ENCODE measurements at regions of chr6 and their contacts with region 1.

Region 1: DNA sequence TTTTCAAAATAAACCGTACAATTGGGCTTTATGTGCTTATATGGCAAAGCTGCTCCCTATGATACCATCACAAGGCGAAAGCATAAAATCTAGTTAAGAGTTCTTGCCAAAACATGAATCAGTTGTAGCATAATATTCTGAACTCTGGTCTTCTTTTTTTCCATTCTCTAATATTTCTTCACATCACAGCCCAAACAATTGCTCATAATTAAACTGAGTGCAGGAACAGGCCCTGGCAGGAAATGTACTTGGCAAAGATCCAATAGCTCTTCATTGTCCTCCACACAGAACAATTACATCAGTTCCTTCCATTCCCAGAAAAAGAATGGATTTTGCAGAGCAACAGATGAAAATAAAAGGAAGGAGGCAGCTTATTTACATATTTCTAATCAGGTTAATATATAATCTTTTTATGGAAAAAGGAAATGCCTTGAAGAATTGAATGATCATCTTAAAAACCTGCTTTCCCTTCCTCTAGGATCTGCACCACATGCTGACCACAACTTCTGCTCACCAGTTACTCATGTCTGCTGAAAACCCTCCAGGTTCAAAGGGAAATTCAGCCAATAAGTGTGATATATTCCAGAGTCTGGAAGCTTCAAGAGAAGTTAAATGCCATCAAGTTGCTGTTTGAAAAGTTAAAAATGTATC is 123.3 kb upstream of the COL21A1 start:
- DNase-seq: peak in 4 of 5 donors; percentile 35 to 68 (median 64)
- ATAC-seq: peak; percentile 66 to 83 (median 80)
- H3K4me3 ChIP-seq: no peak overlapping the region
- H3K27ac ChIP-seq: peak overlapping the region; percentile 56 to 87 (median 76)
- H3K4me1 ChIP-seq: peaks cover 8 to 84% (median 56%) of the 10 kb centered on the region in 12 donors
- H3K27me3 ChIP-seq: no peaks in the 10 kb centered on the region
- CTCF ChIP-seq: no peak
- POLR2A ChIP-seq: no peak

Region 2: GRCh38 chr6:54856129-54856528 is 1514.6 kb before region 1 on chr6:
- intact Hi-C with region 1: no loop called
- DNase-seq: no peak
- ATAC-seq: no peak
- H3K4me3 ChIP-seq: no peak overlapping the region
- H3K27ac ChIP-seq: no peak overlapping the region
- H3K4me1 ChIP-seq: no peaks in the 10 kb centered on the region
- H3K27me3 ChIP-seq: no peaks in the 10 kb centered on the region
- CTCF ChIP-seq: no peak
- POLR2A ChIP-seq: no peak

Region 3: DNA sequence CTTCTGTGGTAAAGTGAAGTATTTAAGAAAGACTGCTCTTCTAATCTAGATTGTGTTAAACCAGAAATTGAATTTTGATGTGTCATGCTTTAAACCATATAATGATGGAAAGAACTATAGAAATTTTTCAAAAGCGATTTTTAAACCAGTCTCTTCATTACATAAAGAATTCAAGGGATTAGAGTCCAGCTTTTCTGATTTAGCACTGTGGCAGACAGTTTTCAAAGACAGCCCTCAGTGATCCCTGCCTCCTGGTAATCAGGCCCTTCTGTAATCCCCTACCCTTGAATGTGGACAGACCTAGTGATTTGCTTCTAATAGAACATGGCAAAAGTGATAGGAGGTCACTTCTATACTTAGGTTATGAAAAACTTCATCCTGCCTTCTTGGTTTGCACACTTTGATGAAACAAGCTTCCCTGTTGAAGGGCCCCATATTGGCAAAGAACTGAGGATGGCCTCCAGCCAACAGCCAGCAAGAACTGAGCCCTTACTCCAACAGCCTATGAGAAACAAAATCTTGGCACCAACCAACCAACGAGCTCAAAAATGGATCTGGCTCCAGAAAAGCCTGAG is 80.6 kb after region 1 on chr6:
- intact Hi-C with region 1: loop called in 4 of 10 experiments (anchors 5 kb)
- DNase-seq: peak; percentile 74 to 83 (median 81)
- ATAC-seq: peak; percentile 71 to 88 (median 78)
- H3K4me3 ChIP-seq: no peak overlapping the region
- H3K27ac ChIP-seq: peak overlapping the region; percentile 39 to 83 (median 70)
- H3K4me1 ChIP-seq: peaks cover 0 to 31% (median 14%) of the 10 kb centered on the region in 12 donors
- H3K27me3 ChIP-seq: no peaks in the 10 kb centered on the region
- CTCF ChIP-seq: no peak
- POLR2A ChIP-seq: no peak

Region 4: DNA sequence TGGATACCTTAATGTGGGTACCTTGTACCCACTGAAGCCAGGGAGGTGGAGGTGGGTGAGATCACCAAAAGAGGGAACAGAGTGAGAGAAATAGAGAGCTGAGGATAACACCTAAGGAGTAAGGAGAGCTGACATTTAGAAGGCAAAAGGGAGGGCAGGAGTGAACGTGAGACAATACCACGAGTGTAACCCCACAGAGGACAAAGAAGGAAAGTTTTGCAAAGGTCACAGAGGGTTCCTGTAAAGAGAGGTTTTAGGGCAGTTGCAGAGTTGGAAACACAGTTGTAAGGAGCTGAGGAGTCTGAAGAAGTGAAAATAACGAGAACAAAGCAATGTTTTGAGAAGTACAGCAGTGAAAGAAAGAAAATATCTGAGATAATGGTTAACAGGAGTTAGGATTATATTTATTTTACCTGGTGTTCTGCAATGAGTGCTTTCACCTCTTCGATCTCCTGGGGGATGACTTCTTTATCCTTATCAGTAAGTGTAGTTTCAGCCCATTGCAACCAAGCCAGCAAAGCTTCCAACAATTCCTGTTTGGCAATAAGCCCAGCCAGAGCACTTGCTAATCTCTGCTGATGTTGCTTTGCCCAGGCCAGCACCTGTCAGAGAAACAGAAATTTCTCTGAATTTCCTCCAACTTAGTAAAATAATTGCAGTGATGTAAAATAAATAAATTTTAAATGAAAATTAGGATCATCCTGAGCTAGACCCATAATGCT is 105.2 kb after region 1 on chr6:
- intact Hi-C with region 1: loop called in 3 of 10 experiments (anchors 5 to 10 kb)
- DNase-seq: peak in 4 of 5 donors; percentile 43 to 68 (median 52)
- ATAC-seq: peak; percentile 73 to 89 (median 86)
- H3K4me3 ChIP-seq: no peak overlapping the region
- H3K27ac ChIP-seq: peak overlapping the region in 4 of 12 donors; percentile 20 to 26 (median 22)
- H3K4me1 ChIP-seq: peaks cover 0 to 26% (median 15%) of the 10 kb centered on the region in 12 donors
- H3K27me3 ChIP-seq: no peaks in the 10 kb centered on the region
- CTCF ChIP-seq: no peak
- POLR2A ChIP-seq: no peak

Region 5: GRCh38 chr6:56517155-56517745 is 146.6 kb after region 1 on chr6:
- intact Hi-C with region 1: no loop called
- DNase-seq: no peak
- ATAC-seq: peak in 3 of 4 donors; percentile 33 to 52 (median 36)
- H3K4me3 ChIP-seq: no peak overlapping the region
- H3K27ac ChIP-seq: peak overlapping the region in 8 of 12 donors; percentile 3 to 74 (median 30)
- H3K4me1 ChIP-seq: peaks cover 0 to 57% (median 29%) of the 10 kb centered on the region in 12 donors
- H3K27me3 ChIP-seq: no peaks in the 10 kb centered on the region
- CTCF ChIP-seq: no peak
- POLR2A ChIP-seq: no peak